Caco-2 (cell line): ENCODE measurements at regions of chr9 and their contacts with region 1.

Region 1: GRCh38 chr9:97710356-97711222 is 13.4 kb upstream of the XPA start:
- DNase-seq: peak; percentile 61 to 72
- H3K4me3 ChIP-seq: no peak overlapping the region
- H3K4me3 Mint-ChIP-seq: no peak overlapping the region
- H3K27ac Mint-ChIP-seq: no peak overlapping the region
- H3K4me1 ChIP-seq: peaks cover 35% of the 10 kb centered on the region
- H3K4me1 Mint-ChIP-seq: peaks cover 11% of the 10 kb centered on the region
- H3K27me3 ChIP-seq: no peaks in the 10 kb centered on the region
- H3K27me3 Mint-ChIP-seq: no peaks in the 10 kb centered on the region
- CTCF ChIP-seq: peak; percentile 80 to 83

Region 2: DNA sequence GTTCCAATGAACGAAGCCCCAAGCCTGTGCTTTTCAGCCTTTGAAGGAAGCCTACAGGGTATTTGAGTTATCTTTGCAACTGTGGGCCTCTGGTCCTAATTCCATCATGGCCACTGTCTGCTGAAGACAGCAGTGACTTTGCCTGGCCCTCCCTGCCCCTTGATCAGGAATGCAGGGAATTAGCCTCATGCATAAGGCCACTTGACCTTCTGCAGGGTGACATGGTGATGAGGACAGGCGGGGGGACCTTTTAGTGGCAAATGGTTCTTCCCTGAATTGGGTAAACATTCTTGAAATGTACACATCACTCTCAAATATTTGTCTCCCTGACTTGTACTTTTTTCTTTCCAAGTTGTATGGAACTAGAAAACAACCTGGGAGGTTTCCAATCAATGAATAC is 11.7 kb after region 1 on chr9:
- CTCF ChIA-PET with region 1: interaction called, 4 read pairs
- POLR2A ChIA-PET with region 1: no interaction called
- intact Hi-C with region 1: loop called (anchors 1 kb)
- DNase-seq: peak; percentile 80 to 89
- H3K4me3 ChIP-seq: no peak overlapping the region
- H3K4me3 Mint-ChIP-seq: no peak overlapping the region
- H3K27ac Mint-ChIP-seq: peak overlapping the region; percentile 53
- H3K4me1 ChIP-seq: peaks cover 24% of the 10 kb centered on the region
- H3K4me1 Mint-ChIP-seq: peaks cover 5% of the 10 kb centered on the region
- H3K27me3 ChIP-seq: no peaks in the 10 kb centered on the region
- H3K27me3 Mint-ChIP-seq: no peaks in the 10 kb centered on the region
- CTCF ChIP-seq: no peak

Region 3: GRCh38 chr9:97759581-97760288 is 49.1 kb after region 1 on chr9:
- CTCF ChIA-PET with region 1: no interaction called
- POLR2A ChIA-PET with region 1: interaction called, 3 read pairs
- intact Hi-C with region 1: loop called (anchors 2 kb)
- DNase-seq: peak; percentile 74 to 77
- H3K4me3 ChIP-seq: no peak overlapping the region
- H3K4me3 Mint-ChIP-seq: peak overlapping the region; percentile 24
- H3K27ac Mint-ChIP-seq: peak overlapping the region; percentile 56
- H3K4me1 ChIP-seq: peaks cover 43% of the 10 kb centered on the region
- H3K4me1 Mint-ChIP-seq: peaks cover 36% of the 10 kb centered on the region
- H3K27me3 ChIP-seq: no peaks in the 10 kb centered on the region
- H3K27me3 Mint-ChIP-seq: no peaks in the 10 kb centered on the region
- CTCF ChIP-seq: peak in 1 of 2 experiments; percentile 18

Region 4: GRCh38 chr9:97803167-97804058 is 92.8 kb after region 1 on chr9:
- CTCF ChIA-PET with region 1: no interaction called
- POLR2A ChIA-PET with region 1: interaction called, 4 read pairs
- intact Hi-C with region 1: loop called (anchors 1 kb)
- DNase-seq: peak; percentile 88 to 91
- H3K4me3 ChIP-seq: peak overlapping the region; percentile 66
- H3K4me3 Mint-ChIP-seq: peak overlapping the region; percentile 82
- H3K27ac Mint-ChIP-seq: peak overlapping the region; percentile 92
- H3K4me1 ChIP-seq: peaks cover 42% of the 10 kb centered on the region
- H3K4me1 Mint-ChIP-seq: peaks cover 39% of the 10 kb centered on the region
- H3K27me3 ChIP-seq: no peaks in the 10 kb centered on the region
- H3K27me3 Mint-ChIP-seq: no peaks in the 10 kb centered on the region
- CTCF ChIP-seq: peak; percentile 29 to 36

Region 5: GRCh38 chr9:97820373-97820772 is 109.8 kb after region 1 on chr9:
- CTCF ChIA-PET with region 1: no interaction called
- POLR2A ChIA-PET with region 1: no interaction called
- intact Hi-C with region 1: no loop called
- DNase-seq: no peak
- H3K4me3 ChIP-seq: no peak overlapping the region
- H3K4me3 Mint-ChIP-seq: no peak overlapping the region
- H3K27ac Mint-ChIP-seq: no peak overlapping the region
- H3K4me1 ChIP-seq: no peaks in the 10 kb centered on the region
- H3K4me1 Mint-ChIP-seq: no peaks in the 10 kb centered on the region
- H3K27me3 ChIP-seq: no peaks in the 10 kb centered on the region
- H3K27me3 Mint-ChIP-seq: peaks cover 3% of the 10 kb centered on the region
- CTCF ChIP-seq: no peak

Region 6: DNA sequence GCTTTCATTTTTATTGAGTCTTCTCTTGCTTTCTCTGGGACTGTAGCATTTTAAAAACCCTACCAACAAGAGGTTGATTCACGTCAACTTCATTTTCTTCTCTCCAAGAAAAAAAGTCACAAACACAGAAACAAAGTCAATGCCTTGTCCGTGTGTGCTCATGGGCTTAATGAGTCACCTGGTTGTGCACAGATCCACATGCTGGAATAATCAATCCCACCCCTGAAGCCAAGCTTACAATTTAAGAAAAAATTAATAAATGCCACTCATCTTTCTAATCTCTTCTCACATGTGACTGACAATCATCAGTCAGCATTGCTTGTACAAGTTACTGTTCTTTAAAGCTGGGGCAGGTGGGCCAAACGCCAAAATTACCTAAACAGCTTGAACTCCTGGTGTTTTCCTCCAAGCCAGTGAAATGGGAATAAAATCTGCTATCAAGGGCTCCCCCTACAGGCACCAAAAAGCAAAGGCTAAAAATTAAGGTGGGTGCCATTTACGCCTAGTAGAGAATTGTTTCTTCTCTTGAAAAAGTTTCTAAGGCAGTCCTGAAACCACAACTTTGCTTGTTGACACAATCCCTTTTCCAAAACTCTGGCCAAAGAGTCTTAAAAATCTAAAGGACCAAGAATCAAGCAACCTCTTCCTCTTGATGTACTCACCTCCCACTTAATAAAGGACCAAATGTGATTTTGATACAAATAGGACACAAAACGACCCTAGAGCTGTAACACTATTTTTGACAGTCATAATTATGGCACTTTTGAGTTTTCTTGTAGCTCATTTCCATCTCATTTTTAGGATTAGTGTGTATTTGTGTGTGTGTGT is 190.4 kb after region 1 on chr9:
- CTCF ChIA-PET with region 1: interaction called, 3 read pairs
- POLR2A ChIA-PET with region 1: no interaction called
- intact Hi-C with region 1: loop called (anchors 1 kb)
- DNase-seq: peak in 1 of 2 experiments; percentile 61
- H3K4me3 ChIP-seq: no peak overlapping the region
- H3K4me3 Mint-ChIP-seq: no peak overlapping the region
- H3K27ac Mint-ChIP-seq: no peak overlapping the region
- H3K4me1 ChIP-seq: no peaks in the 10 kb centered on the region
- H3K4me1 Mint-ChIP-seq: no peaks in the 10 kb centered on the region
- H3K27me3 ChIP-seq: no peaks in the 10 kb centered on the region
- H3K27me3 Mint-ChIP-seq: no peaks in the 10 kb centered on the region
- CTCF ChIP-seq: peak; percentile 71 to 73